ENCODE measurements at regions of chr19 and their contacts with region 1.

Region 1: GRCh38 chr19:42401365-42402303 is 11.5 kb upstream of the CNFN start:
- DNase-seq: peak; percentile 85
- H3K4me3 ChIP-seq: peak overlapping the region in 2 of 3 experiments; percentile 4 to 46
- H3K27ac ChIP-seq: no peak overlapping the region
- H3K4me1 ChIP-seq: peaks cover 11% of the 10 kb centered on the region
- H3K27me3 ChIP-seq: no peaks in the 10 kb centered on the region
- CTCF ChIP-seq: peak; percentile 79 to 84
- POLR2A ChIP-seq: no peak

Region 2: GRCh38 chr19:42108527-42109389 is 292.9 kb before region 1 on chr19:
- CTCF ChIA-PET with region 1: interaction called, 3 read pairs
- POLR2A ChIA-PET with region 1: no interaction called
- dilution Hi-C with region 1: no loop called
- intact Hi-C with region 1: loop called (anchors 1 kb)
- DNase-seq: peak; percentile 90
- H3K4me3 ChIP-seq: no peak overlapping the region
- H3K27ac ChIP-seq: no peak overlapping the region
- H3K4me1 ChIP-seq: peaks cover 20% of the 10 kb centered on the region
- H3K27me3 ChIP-seq: peaks cover 3% of the 10 kb centered on the region in 2 experiments
- CTCF ChIP-seq: peak; percentile 99 to 100
- POLR2A ChIP-seq: no peak

Region 3: GRCh38 chr19:42386974-42387707 is 14.5 kb before region 1 on chr19:
- CTCF ChIA-PET with region 1: interaction called, 5 read pairs
- POLR2A ChIA-PET with region 1: interaction called, 4 read pairs
- dilution Hi-C with region 1: no loop called
- intact Hi-C with region 1: loop called (anchors 1 kb)
- DNase-seq: peak; percentile 41
- H3K4me3 ChIP-seq: peak overlapping the region in 2 of 3 experiments; percentile 10 to 23
- H3K27ac ChIP-seq: no peak overlapping the region
- H3K4me1 ChIP-seq: peaks cover 3% of the 10 kb centered on the region
- H3K27me3 ChIP-seq: peaks cover 12 to 20% of the 10 kb centered on the region in 2 experiments
- CTCF ChIP-seq: peak; percentile 39 to 54
- POLR2A ChIP-seq: no peak

Region 4: GRCh38 chr19:42412227-42412626 is 10.6 kb after region 1 on chr19:
- CTCF ChIA-PET with region 1: interaction called, 14 read pairs
- POLR2A ChIA-PET with region 1: no interaction called
- dilution Hi-C with region 1: no loop called
- intact Hi-C with region 1: no loop called
- DNase-seq: no peak
- H3K4me3 ChIP-seq: no peak overlapping the region
- H3K27ac ChIP-seq: no peak overlapping the region
- H3K4me1 ChIP-seq: no peaks in the 10 kb centered on the region
- H3K27me3 ChIP-seq: no peaks in the 10 kb centered on the region
- CTCF ChIP-seq: no peak
- POLR2A ChIP-seq: no peak

Region 5: GRCh38 chr19:42423462-42424344 is 22.1 kb after region 1 on chr19:
- CTCF ChIA-PET with region 1: interaction called, 19 read pairs
- POLR2A ChIA-PET with region 1: no interaction called
- dilution Hi-C with region 1: no loop called
- intact Hi-C with region 1: loop called (anchors 1 kb)
- DNase-seq: peak; percentile 88
- H3K4me3 ChIP-seq: peak overlapping the region; percentile 25 to 52 (median 49)
- H3K27ac ChIP-seq: peak overlapping the region; percentile 55
- H3K4me1 ChIP-seq: peaks cover 29% of the 10 kb centered on the region
- H3K27me3 ChIP-seq: no peaks in the 10 kb centered on the region
- CTCF ChIP-seq: no peak
- POLR2A ChIP-seq: no peak

Region 6: DNA sequence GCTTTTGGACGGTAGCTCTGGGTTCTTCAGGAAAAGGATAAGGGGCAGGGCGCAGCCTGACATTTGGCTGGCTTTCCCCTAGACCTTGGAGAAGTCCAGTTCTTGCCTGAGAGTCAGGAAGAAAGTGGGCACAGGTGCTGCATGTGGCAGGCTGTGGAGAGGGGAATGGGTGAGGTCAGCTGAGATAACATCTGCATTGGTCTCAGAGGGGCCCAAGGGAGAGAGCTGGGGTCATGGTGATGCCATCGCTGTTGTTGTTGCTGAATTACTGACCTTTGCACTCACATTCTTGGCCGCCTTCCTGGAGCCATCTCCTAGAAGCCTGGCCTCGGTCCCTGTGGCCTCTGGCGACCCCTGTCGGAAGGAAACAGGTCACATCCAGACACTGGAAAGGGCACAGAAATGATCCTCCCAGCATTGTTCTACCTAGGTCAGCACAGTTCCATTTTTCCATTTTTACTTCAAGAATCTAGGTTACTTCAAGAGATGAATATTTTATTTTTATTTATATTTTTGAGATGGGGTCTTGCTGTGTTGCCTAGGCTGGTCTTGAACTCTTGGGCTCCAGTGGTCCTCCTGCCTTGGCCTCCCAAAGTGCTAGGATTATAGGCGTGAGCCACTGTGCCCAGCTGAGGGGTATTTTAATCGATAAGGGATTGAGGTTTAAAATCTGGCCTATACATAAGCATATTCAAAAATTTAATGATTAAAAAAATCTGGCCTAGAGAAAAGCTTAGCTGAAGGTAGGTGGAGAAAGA is 32.0 kb after region 1 on chr19:
- CTCF ChIA-PET with region 1: interaction called, 7 read pairs
- POLR2A ChIA-PET with region 1: interaction called, 3 read pairs
- dilution Hi-C with region 1: no loop called
- intact Hi-C with region 1: loop called (anchors 1 kb)
- DNase-seq: peak; percentile 63
- H3K4me3 ChIP-seq: no peak overlapping the region
- H3K27ac ChIP-seq: no peak overlapping the region
- H3K4me1 ChIP-seq: peaks cover 10% of the 10 kb centered on the region
- H3K27me3 ChIP-seq: no peaks in the 10 kb centered on the region
- CTCF ChIP-seq: peak; percentile 62 to 69
- POLR2A ChIP-seq: no peak

Region 7: DNA sequence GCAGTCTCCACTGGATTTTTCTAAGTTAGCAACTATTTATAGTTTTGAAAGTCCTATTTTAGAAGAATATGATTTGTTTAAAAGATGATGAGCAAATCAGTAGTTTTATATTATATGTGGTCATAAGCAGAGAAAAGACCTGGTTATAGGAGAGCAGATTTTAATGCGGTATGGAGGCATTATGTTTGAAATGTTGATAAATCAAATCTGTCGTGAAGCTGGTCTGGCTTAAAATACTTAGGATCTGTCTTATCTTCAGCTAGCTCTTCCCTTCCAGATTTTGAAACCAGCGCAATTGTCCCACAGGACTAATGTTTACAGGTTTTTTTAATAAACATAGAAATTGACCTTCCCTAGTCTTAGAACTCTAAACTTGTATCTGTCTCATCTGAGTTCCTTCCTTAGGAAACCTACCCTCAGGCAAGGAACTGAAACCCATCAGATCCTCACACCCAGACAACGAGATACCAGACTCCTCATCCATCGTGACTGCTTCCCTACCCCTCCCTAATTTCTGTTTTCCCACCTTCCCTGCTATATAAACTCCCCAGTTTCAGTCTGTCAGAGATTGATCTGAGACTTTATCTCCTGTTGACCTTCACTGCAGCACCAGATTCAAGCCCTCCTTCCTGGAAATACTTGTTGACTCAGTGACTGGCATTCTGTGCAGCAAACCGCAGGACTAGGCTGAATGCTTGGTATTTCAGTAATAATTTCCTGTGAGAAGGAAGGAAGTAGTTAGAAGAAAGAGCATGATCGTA is 78.9 kb after region 1 on chr19:
- CTCF ChIA-PET with region 1: no interaction called
- POLR2A ChIA-PET with region 1: no interaction called
- dilution Hi-C with region 1: no loop called
- intact Hi-C with region 1: no loop called
- DNase-seq: no peak
- H3K4me3 ChIP-seq: no peak overlapping the region
- H3K27ac ChIP-seq: no peak overlapping the region
- H3K4me1 ChIP-seq: no peaks in the 10 kb centered on the region
- H3K27me3 ChIP-seq: no peaks in the 10 kb centered on the region
- CTCF ChIP-seq: no peak
- POLR2A ChIP-seq: no peak